A673 (cell line): ENCODE measurements at regions of chr6 and their contacts with region 1.

Region 1: GRCh38 chr6:10682355-10682988 is 11.9 kb downstream of the C6orf52 start:
- DNase-seq: no peak
- H3K4me3 ChIP-seq: no peak overlapping the region
- H3K27ac ChIP-seq: no peak overlapping the region
- H3K4me1 ChIP-seq: no peaks in the 10 kb centered on the region
- H3K27me3 ChIP-seq: peaks cover 43% of the 10 kb centered on the region
- CTCF ChIP-seq: no peak

Region 2: DNA sequence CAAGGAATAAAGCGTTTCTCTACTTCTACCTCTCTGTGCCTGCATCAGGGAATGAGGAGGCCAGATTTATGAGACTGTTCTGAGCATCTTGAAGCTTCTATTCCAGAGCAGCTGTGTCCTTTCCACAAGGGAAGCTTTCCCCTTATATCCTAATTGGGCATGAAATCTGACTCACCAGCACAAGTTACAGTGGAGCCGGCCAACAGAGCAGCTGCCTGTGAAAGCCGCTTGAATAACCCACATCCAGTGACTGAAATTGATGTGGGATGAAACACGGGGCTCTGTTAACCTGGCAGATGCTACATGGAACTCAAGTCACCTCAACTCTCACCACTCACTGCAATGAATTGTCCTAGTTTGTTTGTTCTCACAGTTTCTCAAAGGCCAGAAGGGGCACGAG is 667.9 kb before region 1 on chr6:
- CTCF ChIA-PET with region 1: no interaction called
- POLR2A ChIA-PET with region 1: no interaction called
- intact Hi-C with region 1: no loop called
- DNase-seq: peak; percentile 34
- H3K4me3 ChIP-seq: no peak overlapping the region
- H3K27ac ChIP-seq: no peak overlapping the region
- H3K4me1 ChIP-seq: no peaks in the 10 kb centered on the region
- H3K27me3 ChIP-seq: no peaks in the 10 kb centered on the region
- CTCF ChIP-seq: no peak

Region 3: DNA sequence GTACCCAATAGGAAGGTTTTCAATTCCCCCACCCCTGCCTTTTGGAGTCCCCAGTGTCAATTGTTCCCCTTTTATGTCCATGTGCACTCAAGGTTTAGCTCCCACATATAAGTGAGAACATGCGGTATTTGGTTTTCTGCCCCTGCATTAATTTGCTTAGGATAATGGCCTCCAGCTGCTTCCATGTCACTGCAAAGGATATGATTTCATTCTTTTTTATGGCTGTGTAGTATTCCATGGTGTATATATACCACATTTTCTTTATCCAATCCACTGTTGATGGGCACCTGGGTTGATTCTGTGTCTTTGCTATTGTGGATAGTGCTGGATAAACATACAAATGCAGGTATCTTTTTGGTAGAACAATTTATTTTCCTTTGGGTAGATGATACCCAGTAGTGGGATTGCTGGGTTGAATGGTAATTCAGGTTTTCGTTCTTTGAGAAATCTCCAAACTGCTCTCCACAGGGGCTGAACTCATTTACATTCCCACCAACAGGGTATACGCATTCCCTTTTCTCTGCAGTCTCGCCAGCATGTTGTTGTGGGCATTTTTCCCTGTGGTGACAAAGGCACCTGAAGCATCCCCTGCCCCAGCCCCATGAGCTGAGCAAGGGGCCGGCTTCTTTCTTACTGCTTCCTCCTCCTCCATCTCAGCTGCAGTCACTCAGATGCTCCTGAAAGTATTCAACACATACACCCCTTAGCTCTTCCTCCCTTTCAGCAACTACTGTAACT is 294.9 kb after region 1 on chr6:
- CTCF ChIA-PET with region 1: interaction called, 13 read pairs
- POLR2A ChIA-PET with region 1: no interaction called
- intact Hi-C with region 1: no loop called
- DNase-seq: no peak
- H3K4me3 ChIP-seq: no peak overlapping the region
- H3K27ac ChIP-seq: no peak overlapping the region
- H3K4me1 ChIP-seq: no peaks in the 10 kb centered on the region
- H3K27me3 ChIP-seq: no peaks in the 10 kb centered on the region
- CTCF ChIP-seq: no peak